Left cardiac atrium (tissue), 4 donors: ENCODE measurements at regions of chr17 and their contacts with region 1.

Region 1: DNA sequence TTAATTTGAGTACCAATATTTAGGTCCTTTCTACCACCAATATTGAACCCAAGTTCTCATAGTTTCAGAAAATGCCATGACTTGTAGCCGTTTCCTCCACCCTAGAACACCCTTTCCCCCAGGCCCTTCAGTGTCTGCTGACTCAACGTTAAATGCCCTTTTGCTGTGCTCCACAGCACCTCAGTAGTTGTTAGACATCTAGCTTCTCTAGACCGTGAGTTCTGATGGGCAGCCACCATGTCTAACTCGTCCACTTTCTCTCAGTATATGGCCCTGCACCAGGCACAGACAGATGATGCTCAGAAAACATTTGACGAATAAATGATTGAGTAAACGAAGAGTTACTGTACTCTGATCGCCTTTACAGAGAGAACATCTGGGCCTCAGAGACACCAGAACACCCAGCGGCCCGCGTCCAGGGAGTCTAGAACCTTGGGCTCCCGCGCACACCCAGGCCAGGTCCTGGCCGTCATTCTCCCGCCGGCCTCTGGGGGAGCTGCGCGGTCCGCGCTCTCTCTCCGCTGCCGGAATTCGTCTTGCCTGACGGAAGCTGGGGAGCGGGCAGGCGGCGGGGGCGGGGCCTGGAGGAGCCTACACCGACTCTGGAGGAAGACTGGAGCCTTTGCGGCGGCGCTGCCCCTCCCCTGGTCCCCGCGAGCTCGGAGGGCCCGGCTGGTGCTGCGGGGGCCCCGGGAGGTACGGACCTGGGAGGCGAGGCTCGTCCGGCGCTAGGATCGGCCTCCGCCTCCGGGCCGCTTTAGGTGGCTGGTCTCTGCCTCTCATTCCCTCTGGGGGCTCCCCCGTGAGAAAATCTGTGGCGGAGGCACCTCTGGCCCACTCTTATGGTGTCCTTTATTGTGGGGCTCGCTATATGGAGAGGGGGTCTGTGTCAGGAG is at the start of gene NKIRAS2:
- DNase-seq: peak; percentile 96
- ATAC-seq: peak; percentile 78 to 80
- total RNA-seq, gene NKIRAS2: 35.3 to 45.9 TPM

Region 2: DNA sequence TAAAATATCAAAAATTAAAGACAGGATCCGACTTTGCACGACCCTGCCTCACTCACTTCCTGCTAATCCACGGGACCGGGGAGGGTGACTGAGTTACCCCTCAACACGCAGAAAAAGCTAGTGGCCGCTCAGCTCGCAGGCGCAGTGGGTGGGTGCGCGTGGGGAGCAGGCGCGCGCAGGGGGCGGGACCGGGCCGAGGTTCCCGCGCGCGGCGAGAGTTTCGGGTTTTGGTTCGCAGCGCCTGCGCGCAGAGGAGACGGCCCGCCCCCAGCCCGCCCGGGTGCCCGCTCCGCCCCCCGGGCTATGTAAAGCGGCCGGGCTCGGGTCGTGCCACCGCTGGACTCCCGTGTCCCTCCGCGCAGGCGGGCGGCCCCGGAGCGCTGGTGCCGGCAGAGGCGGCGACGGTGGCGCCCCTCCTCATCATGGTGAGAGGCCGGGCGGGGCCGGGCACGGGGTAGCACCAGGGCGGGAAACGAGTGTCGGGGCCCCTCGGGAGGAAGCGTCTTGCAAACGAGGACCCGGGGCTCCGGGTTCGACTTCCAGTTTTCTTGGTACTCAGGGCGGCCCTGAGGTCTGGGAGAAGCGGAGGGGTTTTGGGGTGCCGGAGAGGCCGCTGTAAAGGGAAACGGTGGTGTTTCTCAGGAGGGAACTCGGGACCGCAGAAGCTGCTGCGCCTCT is 53.2 kb before region 1 on chr17 and contains the start of gene CNP:
- intact Hi-C with region 1: loop called (anchors 5 to 10 kb)
- DNase-seq: peak; percentile 93
- ATAC-seq: peak; percentile 94 to 95
- total RNA-seq, gene CNP: 40.3 to 43.7 TPM